HEK293T (cell line): ENCODE measurements at regions of chr17 and their contacts with region 1.

Region 1: DNA sequence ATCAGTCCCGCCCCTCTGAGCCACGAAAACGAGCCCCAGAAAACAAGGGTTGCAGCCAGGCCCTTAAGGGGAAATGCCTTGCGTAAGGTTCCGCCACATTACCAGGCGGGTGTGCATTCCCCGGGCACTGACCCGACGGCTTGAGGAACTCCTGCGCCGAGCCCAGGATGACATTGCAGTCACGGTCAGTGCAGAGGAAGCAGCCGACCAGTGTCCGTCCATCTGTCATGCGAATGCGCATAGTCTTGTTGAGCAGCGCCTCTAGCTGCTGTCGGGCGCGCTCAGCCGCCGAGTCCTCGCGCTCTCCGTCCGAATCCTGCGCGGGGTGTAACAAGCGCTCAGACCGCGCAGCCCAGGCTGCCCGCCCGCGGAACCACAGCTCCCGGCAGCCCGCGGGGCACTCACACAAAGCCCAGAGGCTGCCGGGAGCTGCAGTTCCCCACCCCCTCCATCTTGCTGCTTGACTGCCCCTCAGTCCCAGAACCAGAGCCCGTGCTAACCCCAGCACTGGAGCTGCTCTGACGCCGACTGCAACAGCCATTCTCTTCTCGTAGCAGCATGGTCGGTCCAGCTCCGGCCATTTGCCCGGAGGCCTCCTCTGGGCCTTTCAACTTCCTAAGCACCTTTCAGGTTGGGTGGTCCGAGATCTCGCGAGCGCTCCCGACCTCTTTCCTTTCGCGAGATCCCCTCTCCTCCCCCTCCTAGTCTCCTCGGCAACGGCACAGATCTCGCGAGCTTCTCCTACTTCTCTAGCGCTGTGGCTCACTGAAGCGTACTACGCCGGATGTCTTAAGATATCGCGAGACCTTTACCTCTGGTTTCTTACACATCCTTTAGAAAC is at the start of gene NAA38:
- DNase-seq: peak; percentile 90

Region 2: DNA sequence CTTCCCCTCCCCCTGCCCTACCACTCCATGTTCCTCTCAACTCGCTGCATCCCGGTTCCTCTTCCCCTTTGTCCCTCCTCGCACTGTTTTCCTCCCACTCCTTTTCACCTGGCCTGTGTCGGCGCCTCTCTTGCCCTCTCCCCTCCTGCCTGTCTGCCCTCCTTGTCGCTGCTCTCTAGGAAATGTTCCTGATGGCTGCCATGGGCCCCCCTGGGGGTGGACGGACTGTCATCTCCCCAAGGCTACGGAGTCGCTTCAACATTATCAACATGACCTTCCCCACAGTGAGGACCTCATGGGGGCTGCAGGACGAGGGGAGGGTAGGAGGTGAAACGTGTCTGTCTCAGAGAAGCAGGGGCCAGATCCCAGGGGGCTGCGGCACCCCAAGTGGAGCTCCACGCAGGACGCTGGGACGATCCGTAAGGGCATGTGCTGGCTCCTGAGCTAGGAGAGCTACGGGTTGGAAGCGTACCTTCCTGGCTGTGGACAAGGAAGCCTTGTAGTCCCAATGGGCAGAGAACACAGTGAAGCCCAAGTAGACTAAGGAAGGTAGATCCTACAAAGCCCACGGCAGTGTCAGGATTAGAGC is 62.9 kb before region 1 on chr17:
- CTCF ChIA-PET with region 1: no interaction called
- POLR2A ChIA-PET with region 1: no interaction called
- DNase-seq: no peak

Region 3: DNA sequence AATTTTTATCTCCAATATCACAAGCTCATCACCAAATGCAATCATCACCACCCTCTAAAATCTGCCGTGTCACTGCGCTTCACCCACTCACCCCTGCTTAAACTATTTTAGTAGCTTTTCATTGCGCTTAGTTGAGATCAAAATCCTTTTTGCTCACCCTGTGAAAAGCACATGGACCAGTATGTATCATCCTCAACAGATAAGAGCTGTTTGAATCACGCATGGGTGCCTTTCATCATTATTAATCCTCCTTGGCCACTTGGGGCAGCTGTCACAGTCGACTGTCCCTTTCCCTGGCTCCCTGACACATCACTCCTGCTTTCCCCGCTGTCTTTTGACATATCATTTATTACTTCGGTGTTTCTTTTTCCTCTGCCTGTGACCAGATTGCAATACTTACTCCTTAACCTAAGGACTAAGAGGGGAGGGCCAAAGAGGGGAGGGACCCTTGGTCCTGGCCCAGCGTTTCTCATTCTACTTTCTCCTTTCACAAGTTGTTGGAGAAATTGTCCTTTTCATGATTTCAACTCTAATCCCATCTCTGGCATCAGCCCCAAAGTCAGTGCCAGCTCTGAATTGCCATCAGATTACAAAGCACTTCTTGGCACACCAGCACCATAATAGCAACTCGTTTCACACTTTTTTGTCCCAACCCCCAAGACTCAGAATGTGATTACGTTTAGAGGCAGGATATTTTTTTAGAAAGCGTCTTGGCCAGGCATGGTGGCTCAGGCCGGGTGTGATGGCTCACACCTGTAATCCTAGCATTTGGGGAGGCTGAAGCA is 31.7 kb before region 1 on chr17:
- CTCF ChIA-PET with region 1: interaction called, 4 read pairs
- POLR2A ChIA-PET with region 1: interaction called, 12 read pairs
- DNase-seq: no peak

Region 4: GRCh38 chr17:7834962-7835813 is 21.9 kb before region 1 on chr17:
- CTCF ChIA-PET with region 1: interaction called, 5 read pairs
- POLR2A ChIA-PET with region 1: interaction called, 18 read pairs
- DNase-seq: peak; percentile 91

Region 5: DNA sequence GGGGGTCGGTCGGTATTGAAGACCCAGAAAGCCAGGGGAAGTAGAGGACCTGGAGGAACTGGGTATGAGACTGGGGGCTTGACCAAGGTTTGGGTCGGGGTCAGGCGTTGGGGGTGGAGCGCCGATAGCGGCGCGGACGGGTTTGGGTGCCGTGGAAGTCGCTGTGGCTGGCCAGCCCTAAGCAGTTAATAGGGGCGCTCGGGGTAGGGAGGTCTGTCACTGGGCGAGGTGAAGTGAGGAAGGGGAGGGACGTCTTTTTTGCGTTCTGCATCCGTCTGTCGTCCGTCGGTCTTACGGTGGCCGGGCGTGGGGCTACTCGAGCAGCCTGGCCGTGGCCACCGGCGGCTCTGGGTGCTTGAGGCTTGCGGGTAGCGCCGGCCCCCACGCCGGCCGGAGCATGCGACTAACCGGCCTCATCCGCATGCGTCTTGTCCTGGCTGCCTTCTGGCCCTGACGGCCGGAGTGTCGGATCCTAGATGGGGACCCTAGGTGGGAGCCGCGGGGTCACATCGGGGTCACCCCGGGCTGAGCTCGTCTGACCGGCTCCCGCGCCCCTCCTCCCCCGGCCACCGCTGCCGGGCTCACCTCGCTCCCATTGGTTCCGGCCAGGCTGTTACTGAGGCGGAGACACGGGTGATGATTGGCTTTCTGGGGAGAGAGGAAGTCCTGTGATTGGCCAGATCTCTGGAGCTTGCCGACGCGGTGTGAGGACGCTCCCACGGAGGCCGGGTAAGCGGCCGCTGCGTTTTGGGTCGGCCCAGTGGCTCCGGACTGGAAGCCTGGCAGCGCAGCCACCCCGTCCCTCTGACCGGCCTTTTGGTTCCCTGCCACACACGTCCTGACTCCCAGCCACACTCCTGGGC is 12.6 kb before region 1 on chr17:
- CTCF ChIA-PET with region 1: no interaction called
- POLR2A ChIA-PET with region 1: interaction called, 18 read pairs
- DNase-seq: peak; percentile 84

Region 6: GRCh38 chr17:7956228-7956965 is 99.3 kb after region 1 on chr17:
- CTCF ChIA-PET with region 1: no interaction called
- POLR2A ChIA-PET with region 1: no interaction called
- DNase-seq: no peak